ENCODE measurements at regions of chr18 and their contacts with region 1.

Region 1: GRCh38 chr18:34322365-34323289 is 97.9 kb upstream of the NOL4 start:
- H3K4me3 ChIP-seq: no peak overlapping the region
- H3K27ac ChIP-seq: no peak overlapping the region
- H3K4me1 ChIP-seq: no peaks in the 10 kb centered on the region
- CTCF ChIP-seq: 0 out of 2 replicates have a peak, but pooled peaks have one; percentile 39

Region 2: GRCh38 chr18:33833847-33834246 is 488.8 kb before region 1 on chr18:
- CTCF ChIA-PET with region 1: interaction called, 54 read pairs
- POLR2A ChIA-PET with region 1: no interaction called
- H3K4me3 ChIP-seq: no peak overlapping the region
- H3K27ac ChIP-seq: no peak overlapping the region
- H3K4me1 ChIP-seq: no peaks in the 10 kb centered on the region
- CTCF ChIP-seq: no peak

Region 3: DNA sequence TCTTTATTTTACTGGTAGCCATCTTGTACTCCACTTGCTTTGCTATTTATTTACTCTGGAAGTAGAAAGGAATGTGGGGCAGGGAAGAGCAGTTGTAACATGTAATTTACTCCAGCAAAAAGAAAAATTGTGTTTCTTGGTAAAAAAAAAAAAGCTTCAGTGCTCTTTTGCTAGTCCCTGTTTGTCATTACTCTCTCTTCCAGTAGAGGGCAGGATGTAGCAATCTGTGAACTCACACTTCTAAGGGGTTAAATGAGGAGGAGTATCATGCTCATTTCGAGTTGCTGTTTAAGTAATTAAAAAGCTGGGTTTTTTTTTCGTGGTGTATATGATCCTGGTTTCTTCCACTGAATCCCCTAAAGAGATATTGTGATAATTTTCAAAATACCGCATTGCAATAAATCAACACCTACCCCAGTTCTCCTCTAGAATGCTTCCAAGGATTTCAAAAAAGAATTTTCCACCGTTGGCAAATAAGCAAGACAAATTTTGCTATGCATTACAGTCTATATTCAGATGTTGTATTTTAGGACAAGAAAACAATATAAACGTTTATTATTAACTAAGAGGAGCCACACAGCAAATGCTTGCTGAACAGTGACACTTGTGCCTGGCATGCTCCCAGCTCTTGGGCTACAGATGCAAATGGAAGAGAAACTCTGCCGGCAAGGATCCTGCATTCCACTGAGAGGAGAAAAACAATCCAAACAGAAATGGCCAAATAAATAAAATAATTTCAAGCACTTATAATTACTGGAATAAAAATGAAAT is 483.0 kb before region 1 on chr18:
- CTCF ChIA-PET with region 1: interaction called, 54 read pairs
- POLR2A ChIA-PET with region 1: no interaction called
- H3K4me3 ChIP-seq: no peak overlapping the region
- H3K27ac ChIP-seq: no peak overlapping the region
- H3K4me1 ChIP-seq: peaks cover 5% of the 10 kb centered on the region; the same call in 1 of the 2 replicates
- CTCF ChIP-seq: peak; percentile 65

Region 4: GRCh38 chr18:34224423-34225217 is 98.0 kb before region 1 on chr18 and contains the start of gene NOL4:
- CTCF ChIA-PET with region 1: interaction called, 31 read pairs
- POLR2A ChIA-PET with region 1: no interaction called
- H3K4me3 ChIP-seq: peak within 1 kb of the TSS; percentile 70
- H3K27ac ChIP-seq: peak within 1 kb of the TSS; percentile 52; the same call in 1 of the 2 replicates
- H3K4me1 ChIP-seq: no peaks in the 10 kb centered on the region
- CTCF ChIP-seq: peak; percentile 90

Region 5: GRCh38 chr18:34297287-34297686 is 25.3 kb before region 1 on chr18:
- CTCF ChIA-PET with region 1: no interaction called
- POLR2A ChIA-PET with region 1: no interaction called
- H3K4me3 ChIP-seq: no peak overlapping the region
- H3K27ac ChIP-seq: no peak overlapping the region
- H3K4me1 ChIP-seq: no peaks in the 10 kb centered on the region
- CTCF ChIP-seq: no peak

Region 6: DNA sequence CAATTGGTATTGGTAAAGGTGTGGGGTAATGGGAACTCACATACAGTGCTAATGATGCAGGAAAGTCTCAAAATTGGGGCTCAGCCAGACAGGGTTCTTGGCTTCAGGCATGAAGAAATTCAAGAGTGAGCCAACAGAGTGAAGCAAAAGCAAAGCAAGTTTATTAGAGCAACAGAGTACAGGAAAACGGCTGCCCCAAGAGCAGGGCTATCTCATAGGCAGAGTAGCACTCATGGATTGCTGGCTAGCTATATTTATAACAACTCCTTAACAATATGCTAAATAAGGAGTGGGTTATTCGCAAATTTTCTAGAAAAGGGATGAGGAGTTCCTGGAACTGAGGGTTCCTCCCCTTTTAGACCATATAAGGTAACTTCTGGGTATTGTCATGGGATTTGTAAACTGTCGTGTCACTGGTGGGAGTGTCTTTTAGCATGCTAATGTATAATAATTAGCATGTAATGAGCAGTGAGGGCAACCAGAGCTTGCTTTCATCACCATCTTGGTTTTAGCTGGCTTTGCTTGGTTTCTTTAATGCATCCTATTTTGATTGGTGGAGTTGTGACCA is 135.9 kb after region 1 on chr18:
- CTCF ChIA-PET with region 1: no interaction called
- POLR2A ChIA-PET with region 1: no interaction called
- H3K4me3 ChIP-seq: no peak overlapping the region
- H3K27ac ChIP-seq: no peak overlapping the region
- H3K4me1 ChIP-seq: no peaks in the 10 kb centered on the region
- CTCF ChIP-seq: no peak

Measured in HEK293 (cell line).